A673 (cell line): ENCODE measurements at regions of chr18 and their contacts with region 1.

Region 1: GRCh38 chr18:12726774-12727550 is 24.1 kb downstream of the PSMG2 start:
- DNase-seq: peak; percentile 82
- H3K4me3 ChIP-seq: no peak overlapping the region
- H3K27ac ChIP-seq: no peak overlapping the region
- H3K4me1 ChIP-seq: no peaks in the 10 kb centered on the region
- H3K27me3 ChIP-seq: no peaks in the 10 kb centered on the region
- CTCF ChIP-seq: peak; percentile 89

Region 2: DNA sequence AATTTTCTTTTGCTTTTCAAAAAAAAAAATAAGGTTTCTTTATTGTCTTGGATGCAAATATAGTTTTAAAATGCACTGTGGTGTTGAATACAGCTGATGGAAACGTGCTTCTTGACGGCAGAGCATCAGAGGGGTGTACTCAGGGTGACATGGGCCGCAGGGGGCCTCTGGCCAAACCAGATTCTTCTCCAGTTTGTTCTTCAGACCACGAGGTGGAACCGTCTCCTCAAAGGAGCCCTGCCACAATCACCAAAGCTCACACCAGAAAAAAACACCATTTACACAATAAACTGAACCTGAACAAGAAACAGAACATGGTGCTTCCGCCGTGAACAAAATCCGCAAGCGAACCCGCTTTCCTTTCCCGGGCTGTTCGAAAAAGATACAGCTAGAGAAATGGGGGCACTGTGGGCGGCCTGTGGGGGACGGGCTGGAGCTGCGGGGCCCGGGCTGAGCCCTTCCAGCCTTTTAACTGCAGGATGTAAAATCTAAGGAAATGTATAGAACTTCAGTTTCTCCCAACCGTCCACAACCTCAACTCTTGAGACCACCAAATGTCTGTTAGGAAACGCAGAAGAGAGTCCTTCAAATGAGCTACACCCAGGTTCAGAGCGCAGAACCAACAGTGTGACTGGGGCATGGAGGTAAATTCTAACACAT is 10.4 kb after region 1 on chr18:
- CTCF ChIA-PET with region 1: no interaction called
- POLR2A ChIA-PET with region 1: no interaction called
- intact Hi-C with region 1: no loop called
- DNase-seq: no peak
- H3K4me3 ChIP-seq: no peak overlapping the region
- H3K27ac ChIP-seq: no peak overlapping the region
- H3K4me1 ChIP-seq: no peaks in the 10 kb centered on the region
- H3K27me3 ChIP-seq: no peaks in the 10 kb centered on the region
- CTCF ChIP-seq: 0 out of 2 replicates have a peak, but pooled peaks have one; percentile 9

Region 3: DNA sequence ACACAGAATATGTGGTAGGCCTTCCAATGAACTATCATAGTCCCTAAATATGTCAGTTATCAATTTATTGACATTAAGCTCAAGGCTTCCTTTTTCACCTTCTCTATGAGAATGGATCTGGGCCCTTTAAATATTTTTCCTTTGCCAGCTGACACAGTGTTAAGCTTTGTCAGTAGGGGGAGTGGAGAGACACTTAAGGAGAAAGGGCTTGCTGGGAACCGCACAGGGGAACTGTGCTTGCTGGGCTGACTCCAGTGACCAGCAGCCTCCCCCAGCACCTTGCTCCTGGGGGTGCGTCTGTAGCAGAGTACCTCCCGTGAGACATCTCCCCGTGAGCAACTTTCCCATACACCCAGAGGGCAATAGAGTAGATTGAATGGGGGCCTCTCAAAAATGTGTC is 163.5 kb after region 1 on chr18:
- CTCF ChIA-PET with region 1: no interaction called
- POLR2A ChIA-PET with region 1: no interaction called
- intact Hi-C with region 1: loop called (anchors 2 kb)
- DNase-seq: peak; percentile 57
- H3K4me3 ChIP-seq: no peak overlapping the region
- H3K27ac ChIP-seq: no peak overlapping the region
- H3K4me1 ChIP-seq: no peaks in the 10 kb centered on the region
- H3K27me3 ChIP-seq: no peaks in the 10 kb centered on the region
- CTCF ChIP-seq: peak; percentile 24; the same call in 1 of the 2 replicates

Region 4: GRCh38 chr18:12934454-12935071 is 207.6 kb after region 1 on chr18:
- CTCF ChIA-PET with region 1: interaction called, 5 read pairs
- POLR2A ChIA-PET with region 1: no interaction called
- intact Hi-C with region 1: loop called (anchors 1 kb)
- DNase-seq: peak; percentile 86
- H3K4me3 ChIP-seq: no peak overlapping the region
- H3K27ac ChIP-seq: no peak overlapping the region
- H3K4me1 ChIP-seq: no peaks in the 10 kb centered on the region
- H3K27me3 ChIP-seq: no peaks in the 10 kb centered on the region
- CTCF ChIP-seq: peak; percentile 95

Region 5: GRCh38 chr18:13159579-13159978 is 432.6 kb after region 1 on chr18:
- CTCF ChIA-PET with region 1: no interaction called
- POLR2A ChIA-PET with region 1: no interaction called
- intact Hi-C with region 1: loop called (anchors 5 kb)
- DNase-seq: peak; percentile 82
- H3K4me3 ChIP-seq: no peak overlapping the region
- H3K27ac ChIP-seq: no peak overlapping the region
- H3K4me1 ChIP-seq: no peaks in the 10 kb centered on the region
- H3K27me3 ChIP-seq: no peaks in the 10 kb centered on the region
- CTCF ChIP-seq: peak; percentile 76

Region 6: DNA sequence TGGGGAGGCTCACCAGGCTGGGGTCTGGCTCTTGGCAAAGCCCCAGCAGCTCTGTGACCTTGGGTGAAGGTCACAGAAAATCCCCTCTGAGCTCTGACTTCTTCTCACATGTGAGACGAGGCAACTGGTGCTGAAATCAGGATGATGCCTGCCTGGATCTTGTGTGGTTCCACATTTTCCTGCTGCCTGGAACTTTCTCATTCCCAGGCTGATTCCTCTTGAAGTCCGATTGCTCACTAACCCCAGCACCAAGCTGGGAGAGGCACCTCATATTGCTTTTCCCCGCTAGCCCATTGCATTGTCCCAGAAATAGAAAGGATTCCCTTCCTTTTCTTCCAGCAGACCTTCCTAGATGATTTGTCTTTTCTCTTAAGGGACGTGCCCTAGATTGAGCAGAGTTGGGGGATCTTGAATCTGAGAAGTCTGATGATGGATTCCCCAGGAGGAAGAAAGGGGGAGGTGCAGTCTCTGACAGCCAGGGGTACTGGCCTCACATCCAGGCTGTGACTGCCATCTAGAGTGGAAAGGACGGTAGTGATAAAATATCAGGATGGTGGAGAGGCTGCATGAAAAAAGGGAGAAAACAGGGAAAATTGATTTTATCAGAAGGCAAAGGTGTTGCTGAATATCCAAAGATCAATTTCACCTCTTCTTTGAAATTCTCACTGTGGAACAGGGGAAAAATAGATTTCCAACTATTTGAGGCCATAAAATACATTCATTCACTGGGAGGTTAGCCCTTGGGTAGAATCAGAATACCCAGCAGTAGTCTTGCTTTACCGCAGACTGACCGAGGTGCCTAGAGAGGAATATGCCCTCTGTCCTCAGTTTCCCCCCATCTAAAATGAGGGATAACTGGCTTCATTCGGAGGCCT is 903.1 kb after region 1 on chr18:
- CTCF ChIA-PET with region 1: no interaction called
- POLR2A ChIA-PET with region 1: no interaction called
- intact Hi-C with region 1: loop called (anchors 5 kb)
- DNase-seq: peak; percentile 80
- H3K4me3 ChIP-seq: no peak overlapping the region
- H3K27ac ChIP-seq: no peak overlapping the region
- H3K4me1 ChIP-seq: no peaks in the 10 kb centered on the region
- H3K27me3 ChIP-seq: no peaks in the 10 kb centered on the region
- CTCF ChIP-seq: peak; percentile 78